ENCODE measurements at regions of chr4 and their contacts with region 1.

Region 1: GRCh38 chr4:121900132-121900983 is 30.1 kb upstream of the BBS7 start:
- DNase-seq: no peak

Region 2: GRCh38 chr4:122224348-122224747 is 324.0 kb after region 1 on chr4:
- intact Hi-C with region 1: loop called (anchors 5 kb)
- DNase-seq: no peak

Region 3: DNA sequence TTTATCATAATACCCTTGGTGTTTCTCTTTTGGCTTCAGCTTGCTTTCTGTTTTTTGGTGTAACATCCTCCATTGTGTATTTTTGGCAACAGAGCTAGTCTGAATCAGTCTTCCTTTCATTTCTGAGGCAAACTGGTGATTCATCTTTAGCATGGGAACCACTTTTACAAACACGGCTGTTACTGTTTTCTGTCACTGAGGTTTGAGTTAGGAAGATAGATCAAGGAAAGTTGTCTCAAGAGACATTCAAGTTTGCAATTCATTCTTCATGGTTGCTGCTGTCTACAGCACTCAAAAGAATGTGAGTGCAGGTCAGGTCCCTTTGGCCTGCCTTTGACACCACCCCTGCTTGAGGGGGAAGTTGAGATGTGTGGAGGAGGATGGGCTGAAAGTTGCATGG is 684.2 kb after region 1 on chr4:
- intact Hi-C with region 1: loop called (anchors 10 kb)
- DNase-seq: no peak